MCF 10A (cell line): ENCODE measurements at regions of chr9 and their contacts with region 1.

Region 1: DNA sequence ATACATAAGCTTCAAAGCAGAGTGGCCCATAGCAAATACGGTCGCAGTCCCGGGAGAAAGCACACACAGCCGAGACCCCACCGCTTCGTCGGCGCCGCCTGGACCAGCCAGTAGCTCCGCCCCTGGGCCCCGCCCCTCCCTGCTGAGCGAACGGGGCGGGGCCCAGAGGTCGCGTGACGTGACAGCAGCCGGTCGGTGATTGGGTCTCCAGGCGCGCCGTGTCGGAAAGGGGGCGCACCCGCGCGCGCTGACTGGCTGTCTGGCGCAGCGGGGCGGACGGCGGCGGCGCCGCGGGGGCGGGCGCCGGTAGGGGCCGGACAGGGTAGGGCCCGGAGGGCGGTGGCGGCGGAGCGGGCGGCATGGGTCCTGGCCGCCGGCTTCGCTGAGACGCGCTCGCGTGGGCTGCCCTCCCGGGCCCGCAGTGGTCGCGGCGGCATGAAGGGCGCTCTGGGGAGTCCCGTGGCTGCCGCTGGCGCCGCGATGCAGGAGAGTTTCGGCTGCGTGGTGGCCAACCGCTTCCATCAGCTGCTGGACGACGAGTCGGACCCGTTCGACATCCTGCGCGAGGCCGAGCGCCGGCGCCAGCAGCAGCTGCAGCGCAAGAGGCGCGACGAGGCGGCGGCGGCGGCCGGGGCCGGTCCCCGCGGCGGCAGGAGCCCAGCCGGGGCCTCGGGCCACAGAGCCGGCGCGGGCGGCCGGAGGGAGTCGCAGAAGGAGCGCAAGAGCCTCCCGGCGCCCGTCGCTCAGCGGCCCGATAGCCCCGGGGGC is at the start of gene HABP4:
- DNase-seq: peak; percentile 93
- H3K4me3 Mint-ChIP-seq: peak within 1 kb of the TSS; percentile 80
- H3K27ac Mint-ChIP-seq: peak within 1 kb of the TSS; percentile 37
- H3K4me1 Mint-ChIP-seq: peaks cover 11% of the 10 kb centered on the region
- H3K27me3 Mint-ChIP-seq: no peaks in the 10 kb centered on the region
- CTCF ChIP-seq: no peak
- total RNA-seq, gene HABP4: 4.3 and 6.3 TPM in 2 replicates

Region 2: GRCh38 chr9:95349091-95350038 is 1100.7 kb before region 1 on chr9:
- CTCF ChIA-PET with region 1: no interaction called
- POLR2A ChIA-PET with region 1: no interaction called
- intact Hi-C with region 1: no loop called
- DNase-seq: no peak
- H3K4me3 Mint-ChIP-seq: no peak overlapping the region
- H3K27ac Mint-ChIP-seq: no peak overlapping the region
- H3K4me1 Mint-ChIP-seq: no peaks in the 10 kb centered on the region
- H3K27me3 Mint-ChIP-seq: no peaks in the 10 kb centered on the region
- CTCF ChIP-seq: no peak

Region 3: GRCh38 chr9:96327694-96328352 is 122.2 kb before region 1 on chr9:
- CTCF ChIA-PET with region 1: interaction called, 3 read pairs
- POLR2A ChIA-PET with region 1: interaction called, 3 read pairs
- intact Hi-C with region 1: loop called (anchors 1 kb)
- DNase-seq: peak; percentile 78
- H3K4me3 Mint-ChIP-seq: no peak overlapping the region
- H3K27ac Mint-ChIP-seq: no peak overlapping the region
- H3K4me1 Mint-ChIP-seq: peaks cover 7% of the 10 kb centered on the region
- H3K27me3 Mint-ChIP-seq: no peaks in the 10 kb centered on the region
- CTCF ChIP-seq: peak; percentile 83

Region 4: DNA sequence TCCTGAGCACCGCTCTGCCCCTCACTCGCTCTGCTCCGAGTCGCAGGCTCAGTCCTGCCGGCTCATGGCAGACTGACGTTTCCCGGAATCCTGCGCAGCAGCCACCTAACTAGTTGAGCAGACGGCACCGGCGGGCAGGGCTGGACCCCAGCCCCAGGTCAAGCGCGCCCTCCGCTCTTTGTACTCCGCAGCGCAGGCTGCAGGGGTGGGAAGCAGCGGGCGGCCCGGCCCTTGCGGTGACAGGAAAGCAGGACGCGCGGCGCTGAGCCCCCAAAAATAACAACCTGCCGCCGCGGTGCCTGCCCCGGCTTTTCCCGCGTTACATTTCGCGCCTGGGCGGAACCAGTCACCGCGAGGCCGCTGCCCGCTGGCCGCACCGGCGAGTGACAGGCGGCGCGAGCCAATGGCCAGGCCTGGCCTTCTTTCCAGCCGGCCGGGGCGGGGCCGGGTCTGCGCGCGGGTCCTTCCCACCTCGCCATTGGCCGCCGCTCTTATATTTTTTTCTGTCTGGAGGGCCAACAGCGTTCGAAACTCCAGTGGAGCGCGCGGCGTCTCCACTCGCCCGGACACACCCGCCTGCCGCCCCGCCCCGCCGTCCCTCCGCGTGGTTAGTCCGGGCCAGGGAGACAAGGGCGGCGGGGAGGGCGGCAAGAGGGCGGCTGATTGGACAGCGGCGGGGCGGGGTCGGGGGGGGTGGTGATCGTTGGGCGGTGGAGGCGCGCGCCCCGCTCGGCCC is 31.8 kb before region 1 on chr9 and contains the start of gene ZNF367:
- CTCF ChIA-PET with region 1: interaction called, 5 read pairs
- POLR2A ChIA-PET with region 1: interaction called, 28 read pairs
- intact Hi-C with region 1: loop called (anchors 1 kb)
- DNase-seq: peak; percentile 97
- H3K4me3 Mint-ChIP-seq: peak within 1 kb of the TSS; percentile 93
- H3K27ac Mint-ChIP-seq: peak within 1 kb of the TSS; percentile 63
- H3K4me1 Mint-ChIP-seq: peaks cover 22% of the 10 kb centered on the region
- H3K27me3 Mint-ChIP-seq: no peaks in the 10 kb centered on the region
- CTCF ChIP-seq: no peak
- total RNA-seq, gene ZNF367: 1.5 and 2.7 TPM in 2 replicates

Region 5: GRCh38 chr9:96461336-96461735 is 11.3 kb after region 1 on chr9:
- CTCF ChIA-PET with region 1: no interaction called
- POLR2A ChIA-PET with region 1: no interaction called
- intact Hi-C with region 1: no loop called
- DNase-seq: no peak
- H3K4me3 Mint-ChIP-seq: no peak overlapping the region
- H3K27ac Mint-ChIP-seq: no peak overlapping the region
- H3K4me1 Mint-ChIP-seq: no peaks in the 10 kb centered on the region
- H3K27me3 Mint-ChIP-seq: no peaks in the 10 kb centered on the region
- CTCF ChIP-seq: no peak

Region 6: GRCh38 chr9:96523374-96523773 is 73.3 kb after region 1 on chr9:
- CTCF ChIA-PET with region 1: no interaction called
- POLR2A ChIA-PET with region 1: no interaction called
- intact Hi-C with region 1: no loop called
- DNase-seq: no peak
- H3K4me3 Mint-ChIP-seq: no peak overlapping the region
- H3K27ac Mint-ChIP-seq: no peak overlapping the region
- H3K4me1 Mint-ChIP-seq: no peaks in the 10 kb centered on the region
- H3K27me3 Mint-ChIP-seq: no peaks in the 10 kb centered on the region
- CTCF ChIP-seq: no peak

Region 7: GRCh38 chr9:96566498-96567207 is 116.6 kb after region 1 on chr9:
- CTCF ChIA-PET with region 1: interaction called, 5 read pairs
- POLR2A ChIA-PET with region 1: interaction called, 11 read pairs
- intact Hi-C with region 1: loop called (anchors 2 kb)
- DNase-seq: peak; percentile 63
- H3K4me3 Mint-ChIP-seq: peak overlapping the region; percentile 80
- H3K27ac Mint-ChIP-seq: peak overlapping the region; percentile 84
- H3K4me1 Mint-ChIP-seq: peaks cover 6% of the 10 kb centered on the region
- H3K27me3 Mint-ChIP-seq: no peaks in the 10 kb centered on the region
- CTCF ChIP-seq: peak; percentile 49

Region 8: GRCh38 chr9:96654443-96655197 is 204.6 kb after region 1 on chr9:
- CTCF ChIA-PET with region 1: interaction called, 6 read pairs
- POLR2A ChIA-PET with region 1: interaction called, 12 read pairs
- intact Hi-C with region 1: loop called (anchors 1 kb)
- DNase-seq: peak; percentile 69
- H3K4me3 Mint-ChIP-seq: peak overlapping the region; percentile 79
- H3K27ac Mint-ChIP-seq: peak overlapping the region; percentile 91
- H3K4me1 Mint-ChIP-seq: peaks cover 13% of the 10 kb centered on the region
- H3K27me3 Mint-ChIP-seq: no peaks in the 10 kb centered on the region
- CTCF ChIP-seq: no peak